Right ventricle myocardium inferior (tissue), 1 donor: ENCODE measurements at regions of chr1 and their contacts with region 1.

Region 1: DNA sequence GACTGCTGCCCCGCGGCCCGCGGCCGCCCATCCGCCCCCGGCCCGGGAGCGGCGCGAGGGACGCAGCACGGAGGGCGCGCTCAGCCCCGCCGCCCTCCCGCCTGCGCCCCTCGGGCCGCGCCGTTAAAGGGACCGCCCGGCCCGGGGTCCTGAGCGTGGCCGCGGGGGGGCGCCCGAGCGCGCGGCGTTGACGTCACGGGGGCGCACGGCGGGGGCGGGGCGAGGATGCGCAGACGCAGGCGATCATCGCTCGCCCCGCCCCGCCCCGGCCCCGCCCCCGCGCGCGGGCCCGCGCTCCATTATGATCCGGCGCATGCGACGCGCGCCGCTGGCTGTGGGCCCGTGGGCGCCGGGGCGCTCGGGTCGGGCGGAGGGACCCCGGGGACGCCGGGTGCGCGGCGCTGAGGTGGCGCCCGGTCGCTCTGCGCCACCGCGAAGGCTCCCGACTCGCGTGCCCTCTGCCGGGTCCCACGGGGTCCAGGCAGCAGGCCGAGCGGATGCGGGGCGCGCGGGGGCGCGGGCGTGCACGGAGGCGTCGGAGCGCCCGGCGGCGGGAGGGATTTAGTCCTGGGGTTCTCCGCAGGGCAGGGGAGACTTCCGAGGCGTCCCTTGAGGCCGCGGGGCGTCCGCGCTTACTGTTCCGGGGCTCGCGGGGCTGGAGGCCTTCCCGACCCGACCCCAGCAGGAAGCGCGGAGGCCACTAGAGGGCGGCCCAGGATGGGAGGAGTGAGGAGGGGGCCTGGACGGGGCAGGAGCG is at the start of gene DVL1:
- DNase-seq: peak; percentile 87
- ATAC-seq: peak; percentile 29
- total RNA-seq, gene DVL1: 119 TPM

Region 2: DNA sequence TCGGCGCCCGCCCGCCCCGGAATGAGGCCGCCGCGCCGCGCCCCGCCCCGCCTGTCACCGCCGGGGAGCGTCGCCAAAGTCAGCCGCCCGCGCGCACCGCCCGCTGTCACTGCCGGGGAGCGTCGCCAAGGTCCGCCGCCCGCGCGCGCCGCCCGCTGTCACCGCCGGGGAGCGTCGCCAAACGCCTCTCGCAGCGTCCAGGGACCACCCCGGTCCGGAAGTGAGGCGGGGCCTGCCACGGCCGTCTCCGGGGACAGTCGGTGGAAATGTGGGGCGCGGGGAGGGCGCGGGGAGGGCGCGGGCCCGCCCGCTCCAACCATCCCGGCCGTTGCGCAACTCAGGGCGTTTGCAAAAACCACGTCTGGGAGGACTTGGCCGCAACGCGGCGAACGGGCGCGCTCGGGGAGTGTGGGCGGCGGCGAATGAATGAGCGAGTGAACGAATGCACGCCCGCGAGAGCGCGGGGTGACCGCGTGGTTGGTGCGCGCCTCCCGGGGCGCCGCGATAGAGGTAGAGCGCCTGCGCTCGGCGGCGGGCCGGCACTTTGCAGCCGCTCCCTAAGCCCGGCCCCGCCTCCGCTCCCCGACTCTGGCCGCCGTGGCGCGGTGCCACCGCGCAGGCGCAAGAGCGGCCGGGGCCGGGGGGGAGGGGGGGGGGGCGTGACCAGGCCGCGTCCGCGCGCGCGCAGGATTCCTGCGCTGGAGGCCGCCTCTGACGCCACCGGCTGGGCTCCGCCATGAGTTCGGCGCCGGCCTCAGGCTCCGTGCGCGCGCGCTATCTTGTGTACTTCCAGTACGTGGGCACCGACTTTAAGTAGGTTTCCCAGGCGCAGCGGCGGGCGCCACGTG is 41.3 kb before region 1 on chr1 and contains the starts of genes ACAP3 and PUSL1:
- intact Hi-C with region 1: loop called (anchors 2 kb)
- DNase-seq: peak; percentile 95
- ATAC-seq: peak; percentile 81
- total RNA-seq, gene ACAP3: 57.3 TPM
- total RNA-seq, gene PUSL1: 10.3 TPM

Region 3: GRCh38 chr1:1324521-1325287 is 24.7 kb before region 1 on chr1 and contains the starts of genes CPTP and INTS11:
- intact Hi-C with region 1: loop called (anchors 2 kb)
- DNase-seq: peak; percentile 96
- ATAC-seq: peak; percentile 81
- total RNA-seq, gene CPTP: 119 TPM
- total RNA-seq, gene INTS11: 75.7 TPM

Region 4: DNA sequence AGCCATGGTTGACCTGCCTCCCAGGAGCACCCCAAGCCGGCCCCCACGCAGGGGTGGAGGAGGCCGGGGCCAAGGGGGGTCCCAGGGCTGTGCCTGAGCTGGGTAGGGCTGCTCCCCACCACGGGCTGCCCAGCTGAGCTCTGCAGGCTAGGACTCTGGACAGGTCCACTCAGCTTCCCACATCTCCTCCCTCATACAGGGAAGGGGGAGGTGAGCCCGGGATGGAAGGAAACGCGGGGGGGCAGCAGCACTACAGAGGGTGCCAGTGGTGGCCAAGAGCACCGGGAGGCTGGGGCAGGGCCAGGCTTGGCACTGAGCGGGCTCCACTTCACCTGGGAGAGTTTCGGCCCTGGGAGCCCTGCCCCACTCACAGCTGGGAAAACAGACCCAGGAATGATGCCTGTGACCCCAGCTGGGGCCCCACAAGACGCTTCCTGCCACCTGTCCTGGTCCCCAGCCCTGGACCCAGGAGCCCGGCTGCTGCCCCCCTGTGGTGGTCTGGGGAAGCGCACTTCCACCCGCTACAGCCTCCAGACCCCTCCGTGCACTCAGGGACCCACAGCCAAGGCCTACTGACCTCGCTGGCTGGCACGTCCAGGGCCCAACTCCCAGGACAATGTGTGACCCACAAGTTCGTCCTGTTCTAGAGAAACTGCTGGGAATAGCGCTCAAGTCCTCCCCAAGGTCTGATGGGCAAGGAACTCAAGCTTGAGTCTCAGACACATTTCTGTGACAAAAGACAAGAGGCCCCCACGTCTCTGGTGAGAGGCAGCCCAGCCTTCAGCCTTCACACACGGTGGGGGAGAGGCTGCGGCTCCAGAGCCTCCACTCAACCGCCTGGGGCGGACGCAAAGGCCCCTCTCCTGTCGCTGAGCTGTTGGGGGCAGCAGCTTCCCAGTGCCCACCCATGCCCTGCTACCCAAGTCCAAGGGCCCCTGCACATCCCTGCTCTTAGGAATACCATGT is 22.6 kb after region 1 on chr1:
- intact Hi-C with region 1: loop called (anchors 1 kb)
- DNase-seq: peak; percentile 82
- ATAC-seq: peak; percentile 29

Region 5: GRCh38 chr1:1540090-1540817 is 190.8 kb after region 1 on chr1 and contains the start of gene TMEM240:
- intact Hi-C with region 1: no loop called
- DNase-seq: peak; percentile 89
- ATAC-seq: peak; percentile 72
- total RNA-seq, gene TMEM240: 6.9 TPM